IMR-90 (cell line): ENCODE measurements at regions of chr5 and their contacts with region 1.

Region 1: GRCh38 chr5:159975462-159976019 is 33.4 kb upstream of the TTC1 start:
- DNase-seq: peak; percentile 97
- ATAC-seq: peak; percentile 95
- H3K4me3 ChIP-seq: no peak overlapping the region
- H3K27ac ChIP-seq: peak overlapping the region; percentile 77
- H3K4me1 ChIP-seq: peaks cover 19% of the 10 kb centered on the region
- H3K27me3 ChIP-seq: no peaks in the 10 kb centered on the region
- CTCF ChIP-seq: peak; percentile 74
- POLR2A ChIP-seq: no peak
- RAD21 ChIP-seq: peak; percentile 69

Region 2: GRCh38 chr5:159163027-159163700 is 812.4 kb before region 1 on chr5:
- CTCF ChIA-PET with region 1: no interaction called
- POLR2A ChIA-PET with region 1: no interaction called
- dilution Hi-C with region 1: no loop called
- in situ Hi-C with region 1: loop called (anchors 25 kb)
- intact Hi-C with region 1: loop called (anchors 10 kb)
- DNase-seq: peak; percentile 94
- ATAC-seq: peak; percentile 65
- H3K4me3 ChIP-seq: no peak overlapping the region
- H3K27ac ChIP-seq: peak overlapping the region; percentile 31
- H3K4me1 ChIP-seq: peaks cover 15% of the 10 kb centered on the region
- H3K27me3 ChIP-seq: no peaks in the 10 kb centered on the region
- CTCF ChIP-seq: no peak
- POLR2A ChIP-seq: no peak
- RAD21 ChIP-seq: no peak

Region 3: DNA sequence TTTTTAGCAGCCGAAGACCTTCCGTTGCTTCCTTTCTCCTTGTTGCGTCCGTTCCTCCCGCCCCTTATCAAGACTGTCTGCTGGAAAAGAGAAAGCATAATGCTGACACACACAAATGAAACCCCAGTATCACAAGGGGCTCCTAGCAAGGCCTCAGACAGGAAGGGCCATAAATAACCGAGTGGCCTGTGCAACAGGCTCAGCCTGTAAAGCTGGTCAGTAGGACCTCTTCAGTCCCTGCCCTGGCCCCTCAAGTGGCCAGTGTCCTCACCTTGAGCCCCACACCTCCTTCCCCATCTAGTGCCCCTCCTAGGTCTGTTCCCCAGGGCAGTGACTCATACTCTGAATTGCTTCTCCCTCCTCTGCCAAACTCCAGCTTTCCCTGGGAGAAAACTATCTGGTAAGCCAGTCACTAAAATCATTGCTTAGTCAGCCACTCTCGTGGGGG is 470.7 kb before region 1 on chr5:
- CTCF ChIA-PET with region 1: no interaction called
- POLR2A ChIA-PET with region 1: no interaction called
- dilution Hi-C with region 1: no loop called
- in situ Hi-C with region 1: no loop called
- intact Hi-C with region 1: loop called (anchors 5 kb)
- DNase-seq: peak; percentile 78
- ATAC-seq: peak; percentile 76
- H3K4me3 ChIP-seq: no peak overlapping the region
- H3K27ac ChIP-seq: peak overlapping the region; percentile 46
- H3K4me1 ChIP-seq: peaks cover 11% of the 10 kb centered on the region
- H3K27me3 ChIP-seq: no peaks in the 10 kb centered on the region
- CTCF ChIP-seq: no peak
- POLR2A ChIP-seq: no peak
- RAD21 ChIP-seq: no peak

Region 4: DNA sequence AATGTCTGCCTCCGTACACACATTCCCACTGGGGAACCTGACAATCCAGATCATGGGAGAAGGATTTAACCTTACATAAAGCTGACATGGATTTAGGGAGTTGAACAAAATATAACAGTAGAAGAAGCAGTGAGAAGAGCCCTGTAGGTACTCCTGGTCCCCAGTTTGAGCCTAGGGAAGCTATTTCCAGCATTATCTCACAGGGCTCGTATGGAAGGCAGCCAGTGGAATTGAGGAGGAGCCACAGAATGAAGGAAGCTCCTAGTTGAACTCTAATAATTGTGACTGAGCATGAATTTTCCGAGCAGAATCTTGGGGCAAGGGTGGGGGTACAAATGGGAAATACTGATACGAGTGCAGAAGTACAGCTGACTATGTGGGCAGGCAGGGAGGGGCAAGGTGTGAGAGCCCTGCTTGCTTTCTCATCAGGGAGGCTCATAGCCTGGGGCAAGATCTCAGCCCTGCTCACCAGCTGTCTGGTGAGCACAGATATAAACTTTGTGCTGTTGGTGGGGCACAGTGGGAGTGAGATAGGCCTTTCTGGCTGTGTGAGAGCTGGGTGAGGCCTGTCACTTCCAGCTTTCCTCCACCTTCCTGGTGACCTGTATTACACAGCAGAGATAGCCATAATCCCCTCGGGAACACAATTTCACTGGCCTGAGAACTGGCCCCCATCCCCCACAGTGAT is 354.5 kb before region 1 on chr5:
- CTCF ChIA-PET with region 1: no interaction called
- POLR2A ChIA-PET with region 1: no interaction called
- dilution Hi-C with region 1: no loop called
- in situ Hi-C with region 1: no loop called
- intact Hi-C with region 1: no loop called
- DNase-seq: no peak
- ATAC-seq: no peak
- H3K4me3 ChIP-seq: no peak overlapping the region
- H3K27ac ChIP-seq: no peak overlapping the region
- H3K4me1 ChIP-seq: no peaks in the 10 kb centered on the region
- H3K27me3 ChIP-seq: peaks cover 9% of the 10 kb centered on the region
- CTCF ChIP-seq: no peak
- POLR2A ChIP-seq: no peak
- RAD21 ChIP-seq: no peak

Region 5: DNA sequence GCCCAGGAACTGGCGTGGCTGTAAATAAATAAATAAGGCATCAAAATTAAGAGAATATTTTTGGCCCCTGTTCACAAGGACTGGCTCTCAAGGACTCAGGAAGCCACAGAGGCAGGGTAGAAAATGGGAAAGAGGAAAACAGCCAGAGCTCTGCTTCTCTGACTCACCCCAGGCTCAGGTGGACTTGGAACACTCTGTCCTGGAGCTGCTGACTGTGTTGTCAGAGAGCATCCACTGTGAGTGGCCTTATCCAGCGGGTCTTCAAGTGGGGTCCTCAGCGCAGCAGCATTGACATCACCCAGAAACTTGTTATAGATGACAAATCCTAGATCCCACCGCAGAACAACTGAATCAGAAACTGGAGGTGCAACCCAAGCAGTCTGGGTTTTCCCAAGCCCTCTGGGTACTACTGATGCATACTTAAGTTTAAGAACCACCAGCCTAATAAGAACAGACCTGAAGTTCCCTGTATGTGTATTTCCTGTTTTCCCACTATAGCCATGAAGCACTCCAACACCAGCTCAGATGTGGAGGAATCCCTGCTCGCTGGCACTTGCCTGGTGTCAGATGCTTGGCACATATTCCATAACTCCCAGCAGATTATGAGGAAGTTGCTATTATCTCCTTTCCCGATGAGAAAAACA is 38.7 kb before region 1 on chr5:
- CTCF ChIA-PET with region 1: no interaction called
- POLR2A ChIA-PET with region 1: no interaction called
- dilution Hi-C with region 1: no loop called
- in situ Hi-C with region 1: no loop called
- intact Hi-C with region 1: no loop called
- DNase-seq: peak; percentile 15
- ATAC-seq: no peak
- H3K4me3 ChIP-seq: no peak overlapping the region
- H3K27ac ChIP-seq: no peak overlapping the region
- H3K4me1 ChIP-seq: no peaks in the 10 kb centered on the region
- H3K27me3 ChIP-seq: no peaks in the 10 kb centered on the region; the same call in 1 of the 2 replicates
- CTCF ChIP-seq: no peak
- POLR2A ChIP-seq: no peak
- RAD21 ChIP-seq: no peak

Region 6: DNA sequence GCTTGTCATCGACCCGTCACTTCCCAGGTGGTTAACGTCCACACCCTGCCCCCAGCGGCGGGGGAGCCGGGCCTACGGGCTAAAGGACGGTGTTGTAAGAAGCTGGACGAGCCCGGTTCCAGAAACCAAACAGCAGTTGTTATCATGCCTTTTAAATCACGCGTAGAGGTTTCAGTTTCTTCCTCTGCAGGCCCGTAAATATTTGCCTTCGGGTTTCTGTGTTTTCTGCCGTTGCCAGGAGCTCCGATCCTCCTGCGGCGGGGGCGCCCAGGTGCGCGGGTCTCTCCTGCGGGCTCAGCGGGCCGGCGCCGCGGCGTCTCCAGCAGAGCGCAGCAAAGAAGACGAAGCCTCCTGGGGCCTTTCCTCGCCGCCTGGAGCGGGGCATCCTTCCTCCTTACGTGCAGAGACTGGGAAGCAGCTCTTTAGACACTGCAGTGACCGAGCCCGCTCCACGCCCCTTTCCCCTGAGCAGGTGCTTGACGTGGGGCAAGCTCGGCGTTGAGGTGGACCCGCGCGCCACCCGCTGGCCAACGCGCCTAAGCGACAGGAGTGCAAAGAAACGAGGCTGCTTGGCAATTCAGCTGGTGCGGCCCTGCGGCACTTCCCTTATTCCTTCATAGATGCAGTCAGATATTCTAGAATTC is 11.6 kb after region 1 on chr5:
- CTCF ChIA-PET with region 1: interaction called, 13 read pairs
- POLR2A ChIA-PET with region 1: no interaction called
- dilution Hi-C with region 1: no loop called
- in situ Hi-C with region 1: no loop called
- intact Hi-C with region 1: no loop called
- DNase-seq: peak; percentile 58
- ATAC-seq: peak; percentile 94
- H3K4me3 ChIP-seq: peak overlapping the region; percentile 39
- H3K27ac ChIP-seq: no peak overlapping the region
- H3K4me1 ChIP-seq: peaks cover 4% of the 10 kb centered on the region; the same call in 1 of the 2 replicates
- H3K27me3 ChIP-seq: peaks cover 4% of the 10 kb centered on the region
- CTCF ChIP-seq: peak; percentile 83
- POLR2A ChIP-seq: 0 out of 2 replicates have a peak, but pooled peaks have one; percentile 26
- RAD21 ChIP-seq: peak; percentile 87

Region 7: DNA sequence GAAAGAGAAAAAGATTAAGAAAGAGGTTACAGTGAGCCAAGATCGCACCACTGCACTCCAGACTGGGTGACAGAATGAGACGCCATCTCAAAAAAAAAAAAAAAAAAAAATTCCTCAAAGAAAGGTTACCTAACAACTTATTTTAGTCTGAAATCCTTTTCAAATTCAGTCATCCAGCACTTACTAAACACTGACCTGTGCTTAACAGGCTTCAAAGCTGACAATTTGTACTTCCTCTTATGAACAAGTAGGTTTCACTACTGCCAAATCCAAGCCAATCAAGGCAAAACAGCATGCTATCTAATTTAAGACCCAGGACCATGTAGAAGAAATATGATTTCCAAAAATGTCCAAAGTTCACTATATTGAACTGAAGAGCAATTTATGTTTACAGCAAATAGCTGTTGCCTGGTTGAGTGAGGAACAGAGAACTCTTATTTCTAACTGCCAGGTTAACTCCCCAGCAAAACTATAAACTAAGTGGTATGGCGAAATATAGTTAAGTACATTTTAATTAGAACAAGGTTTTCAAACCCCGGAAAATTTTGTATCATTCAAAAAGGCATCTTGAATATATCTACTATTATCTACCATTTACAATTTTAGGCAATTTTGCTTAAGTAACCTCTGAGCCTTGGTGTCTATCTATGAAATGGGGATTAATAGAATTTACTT is 130.3 kb after region 1 on chr5:
- CTCF ChIA-PET with region 1: no interaction called
- POLR2A ChIA-PET with region 1: no interaction called
- dilution Hi-C with region 1: no loop called
- in situ Hi-C with region 1: no loop called
- intact Hi-C with region 1: no loop called
- DNase-seq: no peak
- ATAC-seq: no peak
- H3K4me3 ChIP-seq: no peak overlapping the region
- H3K27ac ChIP-seq: no peak overlapping the region
- H3K4me1 ChIP-seq: no peaks in the 10 kb centered on the region
- H3K27me3 ChIP-seq: no peaks in the 10 kb centered on the region
- CTCF ChIP-seq: no peak
- POLR2A ChIP-seq: no peak
- RAD21 ChIP-seq: no peak

Region 8: DNA sequence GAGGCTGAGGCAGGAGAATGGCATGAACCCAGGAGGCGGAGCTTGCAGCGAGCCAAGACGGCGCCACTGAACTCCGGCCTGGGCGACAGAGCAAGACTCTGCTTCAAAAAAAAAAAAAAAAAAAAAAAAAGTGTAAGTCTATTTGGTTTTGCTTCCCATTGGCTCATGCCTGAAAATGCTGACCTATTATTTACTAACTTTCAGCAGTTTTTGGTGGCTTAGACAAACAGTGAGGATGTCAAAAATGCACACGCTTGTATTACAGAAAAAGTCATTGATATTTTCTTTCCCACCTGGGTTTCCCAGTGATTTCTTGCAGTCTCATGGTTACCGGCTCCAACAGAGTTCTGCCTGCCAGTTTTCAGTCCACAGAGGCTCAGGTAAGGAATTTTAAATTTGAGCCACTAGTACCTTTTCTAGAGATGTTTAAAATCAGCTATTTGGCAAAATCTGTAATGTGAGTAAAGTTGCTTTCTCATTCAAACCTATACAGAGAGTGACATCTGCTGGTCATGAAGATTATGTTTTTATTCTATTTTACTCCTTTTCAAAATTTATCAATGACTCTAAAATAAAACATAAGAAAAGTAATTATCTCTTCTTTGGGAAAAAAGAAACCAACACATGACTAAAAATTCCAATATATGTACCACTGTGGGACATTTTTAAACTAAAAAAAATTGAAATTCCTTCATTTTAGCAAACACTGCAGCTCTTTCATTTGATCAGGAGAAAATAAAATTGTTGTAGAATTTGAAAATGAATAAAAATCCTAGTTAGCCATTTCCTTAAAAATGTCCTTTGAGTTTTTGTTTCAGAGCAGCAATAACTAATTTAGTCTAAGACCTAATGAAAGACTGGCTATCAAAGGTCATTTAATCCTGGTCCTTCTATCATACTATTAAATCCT is 415.5 kb after region 1 on chr5:
- CTCF ChIA-PET with region 1: no interaction called
- POLR2A ChIA-PET with region 1: no interaction called
- dilution Hi-C with region 1: no loop called
- in situ Hi-C with region 1: no loop called
- intact Hi-C with region 1: loop called (anchors 1 kb)
- DNase-seq: peak; percentile 36
- ATAC-seq: no peak; the same call in 1 of the 2 replicates
- H3K4me3 ChIP-seq: no peak overlapping the region
- H3K27ac ChIP-seq: no peak overlapping the region
- H3K4me1 ChIP-seq: no peaks in the 10 kb centered on the region
- H3K27me3 ChIP-seq: no peaks in the 10 kb centered on the region
- CTCF ChIP-seq: peak; percentile 59
- POLR2A ChIP-seq: no peak
- RAD21 ChIP-seq: peak; percentile 69